Motor neuron (in vitro differentiated cells): ENCODE measurements at regions of chr4 and their contacts with region 1.

Region 1: GRCh38 chr4:140359562-140360427 is 13.7 kb upstream of the SCOC start:
- ATAC-seq: peak; percentile 83 to 98 (median 88)
- H3K4me3 ChIP-seq: no peak overlapping the region
- H3K27ac ChIP-seq: no peak overlapping the region
- H3K4me1 ChIP-seq: no peaks in the 10 kb centered on the region

Region 2: GRCh38 chr4:140168474-140168873 is 191.3 kb before region 1 on chr4:
- in situ Hi-C with region 1: no loop called
- ATAC-seq: peak in 1 of 8 experiments; percentile 33
- H3K4me3 ChIP-seq: no peak overlapping the region
- H3K27ac ChIP-seq: no peak overlapping the region
- H3K4me1 ChIP-seq: peaks cover 0 to under 1% of the 10 kb centered on the region in 2 donors

Region 3: DNA sequence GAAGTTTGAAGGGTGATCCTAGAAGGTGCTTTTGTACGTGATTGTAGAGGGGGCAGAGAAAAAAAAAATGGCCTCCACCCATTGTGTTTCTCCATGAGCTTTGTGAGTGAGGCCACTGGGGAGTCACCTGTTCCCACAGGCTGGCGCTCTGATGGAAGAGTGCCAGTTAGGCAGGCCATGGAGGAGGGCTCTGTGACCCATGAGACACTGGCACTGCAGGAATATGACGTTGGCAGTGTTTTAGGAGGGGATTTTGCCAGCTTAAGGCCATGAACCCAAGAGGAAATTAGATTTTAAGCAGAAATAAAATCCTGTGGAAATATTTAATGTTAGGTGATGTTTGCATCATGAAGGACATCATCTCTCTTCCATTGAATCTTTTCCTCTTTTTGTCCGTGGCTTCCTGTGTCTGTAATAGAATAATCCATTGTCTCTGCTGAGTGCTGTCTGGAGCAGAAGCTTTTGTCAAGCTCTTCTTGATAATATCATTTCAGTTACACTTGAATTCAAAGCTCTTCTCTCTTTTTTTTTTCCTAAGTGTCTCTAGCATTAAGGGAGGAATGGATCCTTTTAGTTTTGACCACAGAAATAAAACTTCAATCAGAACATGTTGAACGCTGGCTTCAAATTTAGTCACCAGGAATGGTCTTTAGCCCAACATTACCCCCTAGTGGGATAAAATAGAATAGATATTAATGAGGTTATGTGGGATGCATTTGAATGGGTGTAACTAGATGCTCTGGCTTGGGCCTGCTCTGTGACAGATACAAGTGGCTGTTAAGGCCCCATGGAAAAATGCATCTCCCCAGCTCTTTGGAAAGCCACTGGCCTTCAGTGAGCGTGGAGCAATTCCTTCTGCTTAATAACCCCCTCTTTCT is 250.0 kb after region 1 on chr4:
- in situ Hi-C with region 1: loop called in 3 of 9 experiments (anchors 25 kb)
- ATAC-seq: peak; percentile 84 to 98 (median 96)
- H3K4me3 ChIP-seq: no peak overlapping the region
- H3K27ac ChIP-seq: no peak overlapping the region
- H3K4me1 ChIP-seq: peaks cover 9% of the 10 kb centered on the region in 2 donors

Region 4: GRCh38 chr4:140861359-140862176 is 501.8 kb after region 1 on chr4:
- in situ Hi-C with region 1: loop called in 2 of 9 experiments (anchors 25 kb)
- ATAC-seq: peak; percentile 32 to 80 (median 60)
- H3K4me3 ChIP-seq: no peak overlapping the region
- H3K27ac ChIP-seq: no peak overlapping the region
- H3K4me1 ChIP-seq: peaks cover 5 to 20% of the 10 kb centered on the region in 2 donors

Region 5: DNA sequence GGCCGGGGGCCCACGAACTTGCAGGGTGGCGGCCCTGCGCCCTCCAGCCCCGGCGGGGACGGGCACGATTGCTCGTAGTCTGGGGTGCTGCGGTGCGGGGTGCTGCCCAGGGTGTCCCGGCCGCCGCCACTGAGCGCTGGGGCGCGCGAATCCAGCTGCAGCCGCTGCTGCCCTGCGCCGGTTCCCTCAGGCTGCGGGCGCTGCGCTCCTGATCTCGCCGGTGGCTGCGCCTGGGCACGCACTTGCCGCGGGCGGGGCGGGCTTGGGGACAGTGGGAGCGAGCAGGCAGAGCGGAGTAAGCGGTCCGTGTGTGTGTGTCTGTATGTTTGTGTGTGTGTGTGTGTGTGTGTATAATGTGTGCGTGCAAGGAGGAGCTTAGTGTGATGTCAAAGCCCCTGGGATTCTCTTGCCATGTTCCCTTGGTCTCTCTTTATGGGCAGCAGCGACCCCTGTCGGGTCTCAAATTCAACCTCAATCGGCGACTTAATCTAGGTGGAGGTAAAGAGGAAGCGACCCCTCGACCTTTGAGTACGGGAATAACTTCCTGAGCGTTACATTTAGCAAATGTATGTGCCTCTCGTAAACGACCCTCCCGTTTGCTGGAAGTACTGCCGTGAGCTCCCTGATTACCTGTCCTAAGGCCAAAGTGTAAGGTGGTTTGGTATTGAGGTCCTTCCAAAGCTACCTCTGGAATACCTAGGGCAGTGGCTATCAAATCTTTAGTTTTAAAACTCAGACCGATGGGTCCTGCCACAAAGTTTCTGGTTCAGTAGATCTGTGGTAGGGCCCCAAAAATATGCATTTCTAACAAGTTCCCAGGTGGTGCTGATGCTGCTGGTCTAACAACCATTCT is 773.6 kb after region 1 on chr4 and contains the start of gene RNF150:
- in situ Hi-C with region 1: loop called in 1 of 9 experiments (anchors 25 kb)
- ATAC-seq: peak; percentile 72 to 96 (median 94)
- H3K4me3 ChIP-seq: peak within 1 kb of the TSS; percentile 73 to 87 (median 81)
- H3K27ac ChIP-seq: peak within 1 kb of the TSS; percentile 81 to 88
- H3K4me1 ChIP-seq: peaks cover 3 to 19% of the 10 kb centered on the region in 2 donors
- total RNA-seq, gene RNF150: 0.71 to 45.2 (median 20.0) TPM